SK-MEL-5 (cell line): ENCODE measurements at regions of chr17 and their contacts with region 1.

Region 1: DNA sequence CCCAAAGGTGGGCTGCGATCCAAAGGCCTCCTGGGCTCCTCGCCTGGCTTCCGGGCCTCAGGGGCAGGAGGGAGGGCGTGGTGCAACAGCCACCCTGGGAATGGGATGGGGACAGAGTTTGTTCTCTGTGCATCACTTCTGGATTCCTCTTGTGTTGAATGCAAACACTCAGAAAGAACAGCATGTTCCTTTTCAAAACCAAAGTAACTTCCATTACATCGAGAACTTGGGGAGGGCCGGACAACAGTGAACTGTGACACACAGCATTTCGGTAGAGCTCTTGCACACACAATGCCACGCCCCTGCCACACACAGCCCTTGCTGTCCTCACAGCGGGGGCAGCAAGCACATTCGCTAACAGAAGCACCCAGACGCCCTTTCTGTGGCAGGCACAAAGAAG is 36.1 kb upstream of the FASN start:
- DNase-seq: no peak

Region 2: GRCh38 chr17:81941790-81942553 is 192.1 kb before region 1 on chr17:
- in situ Hi-C with region 1: no loop called
- DNase-seq: no peak

Region 3: GRCh38 chr17:82037113-82037888 is 96.8 kb before region 1 on chr17 and contains the start of gene DCXR:
- in situ Hi-C with region 1: loop called (anchors 10 kb)
- DNase-seq: peak; percentile 99
- total RNA-seq, gene DCXR: 120 and 129 TPM in 2 replicates

Region 4: DNA sequence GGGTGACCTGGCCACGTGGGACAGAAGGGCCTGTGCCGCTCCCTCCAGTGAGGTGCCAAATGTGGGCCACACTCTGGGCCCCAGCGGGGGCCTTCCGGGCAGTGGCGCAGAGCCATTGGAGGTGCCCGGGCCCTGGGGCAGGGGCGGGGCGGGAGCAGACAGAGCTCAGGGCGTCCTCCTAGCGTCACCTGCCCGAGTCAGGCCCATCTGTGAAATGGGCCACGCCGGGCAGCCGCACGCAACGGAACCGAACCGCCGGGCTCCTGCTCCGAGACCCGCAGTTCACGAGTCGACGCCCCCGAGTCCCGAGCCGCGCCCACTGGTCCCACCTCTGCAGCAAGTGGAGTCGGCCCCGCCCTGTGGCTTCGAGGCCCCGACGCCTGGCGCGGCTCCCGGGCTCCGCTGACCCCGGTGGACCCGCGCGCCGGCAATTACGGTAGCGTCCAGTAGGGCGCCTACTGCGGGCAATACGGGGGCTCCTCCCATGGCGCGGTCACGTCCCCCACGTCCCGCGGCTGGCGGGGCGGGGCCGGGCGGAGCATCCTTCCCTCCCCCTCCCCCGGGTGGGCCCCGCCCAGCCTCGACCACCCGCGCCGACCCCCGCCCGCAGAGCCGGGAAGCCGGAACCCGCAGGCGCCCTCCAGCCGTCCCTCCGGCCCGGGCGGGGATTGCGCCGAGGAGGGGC is 96.7 kb after region 1 on chr17:
- in situ Hi-C with region 1: no loop called
- DNase-seq: peak; percentile 85